Naive thymus-derived CD4-positive, alpha-beta T cell (primary cell): ENCODE measurements at regions of chr1 and their contacts with region 1.

Region 1: GRCh38 chr1:167220537-167221125 is at the start of gene POU2F1:
- DNase-seq: peak; percentile 97 to 99 (median 98)
- ATAC-seq: peak; percentile 91
- H3K4me3 ChIP-seq: peak within 1 kb of the TSS; percentile 90
- H3K4me3 Mint-ChIP-seq: peak within 1 kb of the TSS; percentile 87 to 98 (median 96)
- H3K27ac ChIP-seq: peak within 1 kb of the TSS; percentile 83
- H3K27ac Mint-ChIP-seq: peak within 1 kb of the TSS; percentile 92 to 99 (median 98)
- H3K4me1 ChIP-seq: peaks cover 11 to 20% of the 10 kb centered on the region in 2 donors
- H3K4me1 Mint-ChIP-seq: peaks cover 28 to 48% (median 42%) of the 10 kb centered on the region in 7 donors
- H3K27me3 ChIP-seq: no peaks in the 10 kb centered on the region
- H3K27me3 Mint-ChIP-seq: peaks cover 0 to 3% (median 0%) of the 10 kb centered on the region in 5 donors
- total RNA-seq, gene POU2F1: 20.6 to 36.6 (median 23.3) TPM

Region 2: GRCh38 chr1:165630629-165631341 is 1589.8 kb before region 1 on chr1 and contains the start of gene MGST3:
- CTCF ChIA-PET with region 1: interaction called, 3 read pairs
- POLR2A ChIA-PET with region 1: no interaction called
- intact Hi-C with region 1: loop called (anchors 2 kb)
- DNase-seq: peak; percentile 91 to 96 (median 93)
- ATAC-seq: peak; percentile 98
- H3K4me3 ChIP-seq: peak within 1 kb of the TSS; percentile 91
- H3K4me3 Mint-ChIP-seq: no peak within 1 kb of the TSS
- H3K27ac ChIP-seq: peak within 1 kb of the TSS; percentile 78
- H3K27ac Mint-ChIP-seq: peak within 1 kb of the TSS in 1 of 9 donors; percentile 89
- H3K4me1 ChIP-seq: peaks cover 16 to 18% of the 10 kb centered on the region in 2 donors
- H3K4me1 Mint-ChIP-seq: peaks cover 5 to 27% (median 20%) of the 10 kb centered on the region in 7 donors
- H3K27me3 ChIP-seq: no peaks in the 10 kb centered on the region
- H3K27me3 Mint-ChIP-seq: peaks cover 0 to 16% (median 0%) of the 10 kb centered on the region in 5 donors
- total RNA-seq, gene MGST3: 21.4 to 59.4 (median 48.3) TPM

Region 3: DNA sequence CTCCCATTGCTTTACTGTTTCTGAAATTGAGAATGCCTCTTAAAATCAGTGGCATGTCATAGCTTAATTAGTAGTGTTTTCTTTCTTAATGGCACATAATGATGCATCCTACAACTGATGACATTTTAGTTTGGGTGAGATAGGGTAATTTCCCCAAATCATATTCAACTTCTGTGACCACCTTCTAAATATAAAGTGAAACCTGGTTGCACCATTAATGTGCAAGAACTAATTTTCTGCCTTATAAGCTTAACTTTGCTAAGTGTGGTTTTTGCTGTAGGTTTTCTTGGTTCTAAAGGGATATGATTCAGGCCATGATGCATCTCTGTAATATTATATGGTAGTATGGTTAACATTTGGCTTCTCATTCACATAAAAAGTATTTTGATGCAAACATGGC is 372.4 kb before region 1 on chr1:
- CTCF ChIA-PET with region 1: no interaction called
- POLR2A ChIA-PET with region 1: no interaction called
- intact Hi-C with region 1: no loop called
- DNase-seq: no peak
- ATAC-seq: no peak
- H3K4me3 ChIP-seq: no peak overlapping the region
- H3K4me3 Mint-ChIP-seq: no peak overlapping the region
- H3K27ac ChIP-seq: no peak overlapping the region
- H3K27ac Mint-ChIP-seq: peak overlapping the region in 2 of 9 donors; percentile 28 to 48
- H3K4me1 ChIP-seq: no peaks in the 10 kb centered on the region
- H3K4me1 Mint-ChIP-seq: peaks cover 26 to 77% (median 59%) of the 10 kb centered on the region in 7 donors
- H3K27me3 ChIP-seq: no peaks in the 10 kb centered on the region
- H3K27me3 Mint-ChIP-seq: no peaks in the 10 kb centered on the region

Region 4: GRCh38 chr1:166975361-166976129 is 245.1 kb before region 1 on chr1 and contains the start of gene ILDR2:
- CTCF ChIA-PET with region 1: no interaction called
- POLR2A ChIA-PET with region 1: no interaction called
- intact Hi-C with region 1: loop called (anchors 2 to 10 kb)
- DNase-seq: peak; percentile 25 to 72 (median 44)
- ATAC-seq: peak; percentile 88
- H3K4me3 ChIP-seq: peak within 1 kb of the TSS; percentile 71
- H3K4me3 Mint-ChIP-seq: peak within 1 kb of the TSS; percentile 73 to 98 (median 88)
- H3K27ac ChIP-seq: peak within 1 kb of the TSS; percentile 54
- H3K27ac Mint-ChIP-seq: peak within 1 kb of the TSS; percentile 30 to 84 (median 51)
- H3K4me1 ChIP-seq: peaks cover 4 to 9% of the 10 kb centered on the region in 2 donors
- H3K4me1 Mint-ChIP-seq: peaks cover 19 to 46% (median 24%) of the 10 kb centered on the region in 7 donors
- H3K27me3 ChIP-seq: peaks cover 0 to 5% of the 10 kb centered on the region in 2 donors
- H3K27me3 Mint-ChIP-seq: peaks cover 13 to 31% (median 24%) of the 10 kb centered on the region in 5 donors
- total RNA-seq, gene ILDR2: 0.15 to 10.0 (median 0.29) TPM

Region 5: DNA sequence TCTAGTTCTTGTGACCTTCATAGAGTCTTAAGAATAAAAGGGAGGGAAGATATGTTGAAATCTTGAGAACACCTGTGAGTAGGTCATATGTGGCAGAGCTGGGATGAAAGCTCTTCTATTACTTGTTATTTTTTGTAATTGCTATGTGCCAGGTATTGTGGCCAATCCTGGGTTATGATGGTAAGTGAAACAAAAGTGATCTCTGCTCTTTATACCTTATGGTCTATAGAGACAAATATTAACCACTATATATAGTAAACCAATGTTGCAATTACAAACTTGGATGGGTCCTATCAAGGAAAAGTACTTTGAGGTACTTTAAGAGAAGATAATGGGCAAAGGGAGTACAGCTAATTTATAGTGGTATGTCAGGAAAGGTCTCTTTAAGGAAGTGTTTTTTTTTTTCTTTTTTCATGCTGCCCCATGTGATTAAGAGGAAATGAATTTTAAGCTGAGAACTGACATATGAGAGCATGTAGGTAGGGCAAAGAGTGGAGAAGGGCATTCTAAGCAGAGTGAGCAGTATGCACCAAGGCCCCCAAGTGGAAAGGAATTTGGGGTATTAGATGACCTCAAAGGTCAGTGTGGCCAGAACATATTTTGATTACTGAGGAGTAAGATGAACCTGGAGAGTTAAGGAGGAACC is 43.3 kb after region 1 on chr1:
- CTCF ChIA-PET with region 1: interaction called, 4 read pairs
- POLR2A ChIA-PET with region 1: interaction called, 17 read pairs
- intact Hi-C with region 1: loop called (anchors 1 kb)
- DNase-seq: peak in 6 of 9 donors; percentile 5 to 28 (median 14)
- ATAC-seq: peak; percentile 42
- H3K4me3 ChIP-seq: no peak overlapping the region
- H3K4me3 Mint-ChIP-seq: no peak overlapping the region
- H3K27ac ChIP-seq: no peak overlapping the region
- H3K27ac Mint-ChIP-seq: no peak overlapping the region
- H3K4me1 ChIP-seq: peaks cover 12 to 29% of the 10 kb centered on the region in 2 donors
- H3K4me1 Mint-ChIP-seq: peaks cover 20 to 40% (median 35%) of the 10 kb centered on the region in 7 donors
- H3K27me3 ChIP-seq: no peaks in the 10 kb centered on the region
- H3K27me3 Mint-ChIP-seq: no peaks in the 10 kb centered on the region

Region 6: GRCh38 chr1:167291539-167292185 is 71.0 kb after region 1 on chr1:
- CTCF ChIA-PET with region 1: no interaction called
- POLR2A ChIA-PET with region 1: no interaction called
- intact Hi-C with region 1: no loop called
- DNase-seq: no peak
- ATAC-seq: no peak
- H3K4me3 ChIP-seq: no peak overlapping the region
- H3K4me3 Mint-ChIP-seq: no peak overlapping the region
- H3K27ac ChIP-seq: no peak overlapping the region
- H3K27ac Mint-ChIP-seq: no peak overlapping the region
- H3K4me1 ChIP-seq: no peaks in the 10 kb centered on the region
- H3K4me1 Mint-ChIP-seq: peaks cover 0 to 55% (median 44%) of the 10 kb centered on the region in 7 donors
- H3K27me3 ChIP-seq: no peaks in the 10 kb centered on the region
- H3K27me3 Mint-ChIP-seq: no peaks in the 10 kb centered on the region

Region 7: GRCh38 chr1:167517535-167518330 is 297.1 kb after region 1 on chr1:
- CTCF ChIA-PET with region 1: no interaction called
- POLR2A ChIA-PET with region 1: interaction called, 30 read pairs
- intact Hi-C with region 1: loop called (anchors 1 to 2 kb)
- DNase-seq: peak; percentile 45 to 90 (median 64)
- ATAC-seq: peak; percentile 82
- H3K4me3 ChIP-seq: peak overlapping the region; percentile 86
- H3K4me3 Mint-ChIP-seq: peak overlapping the region; percentile 88 to 100 (median 99)
- H3K27ac ChIP-seq: peak overlapping the region; percentile 96
- H3K27ac Mint-ChIP-seq: peak overlapping the region; percentile 93 to 100 (median 98)
- H3K4me1 ChIP-seq: peaks cover 17 to 32% of the 10 kb centered on the region in 2 donors
- H3K4me1 Mint-ChIP-seq: peaks cover 18 to 60% (median 40%) of the 10 kb centered on the region in 7 donors
- H3K27me3 ChIP-seq: no peaks in the 10 kb centered on the region
- H3K27me3 Mint-ChIP-seq: peaks cover 0 to 11% (median 0%) of the 10 kb centered on the region in 5 donors

Region 8: GRCh38 chr1:167627865-167628641 is 407.4 kb after region 1 on chr1:
- CTCF ChIA-PET with region 1: no interaction called
- POLR2A ChIA-PET with region 1: interaction called, 4 read pairs
- intact Hi-C with region 1: loop called in 1 of 2 experiments (anchors 2 kb)
- DNase-seq: peak; percentile 33 to 84 (median 73)
- ATAC-seq: peak; percentile 84
- H3K4me3 ChIP-seq: peak overlapping the region; percentile 48
- H3K4me3 Mint-ChIP-seq: peak overlapping the region; percentile 82 to 99 (median 92)
- H3K27ac ChIP-seq: peak overlapping the region; percentile 94
- H3K27ac Mint-ChIP-seq: peak overlapping the region; percentile 85 to 98 (median 95)
- H3K4me1 ChIP-seq: peaks cover 44 to 46% of the 10 kb centered on the region in 2 donors
- H3K4me1 Mint-ChIP-seq: peaks cover 48 to 69% (median 63%) of the 10 kb centered on the region in 7 donors
- H3K27me3 ChIP-seq: no peaks in the 10 kb centered on the region
- H3K27me3 Mint-ChIP-seq: no peaks in the 10 kb centered on the region

Region 9: GRCh38 chr1:168225476-168226190 is 1005.0 kb after region 1 on chr1 and contains the start of gene SFT2D2:
- CTCF ChIA-PET with region 1: no interaction called
- POLR2A ChIA-PET with region 1: no interaction called
- intact Hi-C with region 1: loop called in 1 of 2 experiments (anchors 2 kb)
- DNase-seq: peak; percentile 71 to 86 (median 83)
- ATAC-seq: peak; percentile 97
- H3K4me3 ChIP-seq: peak within 1 kb of the TSS; percentile 88
- H3K4me3 Mint-ChIP-seq: peak within 1 kb of the TSS; percentile 92 to 98 (median 96)
- H3K27ac ChIP-seq: peak within 1 kb of the TSS; percentile 85
- H3K27ac Mint-ChIP-seq: peak within 1 kb of the TSS; percentile 81 to 98 (median 92)
- H3K4me1 ChIP-seq: peaks cover 14 to 15% of the 10 kb centered on the region in 2 donors
- H3K4me1 Mint-ChIP-seq: peaks cover 30 to 56% (median 45%) of the 10 kb centered on the region in 7 donors
- H3K27me3 ChIP-seq: no peaks in the 10 kb centered on the region
- H3K27me3 Mint-ChIP-seq: peaks cover 0 to 7% (median 4%) of the 10 kb centered on the region in 5 donors
- total RNA-seq, gene SFT2D2: 46.9 to 79.8 (median 51.3) TPM